Transverse colon (tissue), 4 donors: ENCODE measurements at regions of chr2 and their contacts with region 1.

Region 1: DNA sequence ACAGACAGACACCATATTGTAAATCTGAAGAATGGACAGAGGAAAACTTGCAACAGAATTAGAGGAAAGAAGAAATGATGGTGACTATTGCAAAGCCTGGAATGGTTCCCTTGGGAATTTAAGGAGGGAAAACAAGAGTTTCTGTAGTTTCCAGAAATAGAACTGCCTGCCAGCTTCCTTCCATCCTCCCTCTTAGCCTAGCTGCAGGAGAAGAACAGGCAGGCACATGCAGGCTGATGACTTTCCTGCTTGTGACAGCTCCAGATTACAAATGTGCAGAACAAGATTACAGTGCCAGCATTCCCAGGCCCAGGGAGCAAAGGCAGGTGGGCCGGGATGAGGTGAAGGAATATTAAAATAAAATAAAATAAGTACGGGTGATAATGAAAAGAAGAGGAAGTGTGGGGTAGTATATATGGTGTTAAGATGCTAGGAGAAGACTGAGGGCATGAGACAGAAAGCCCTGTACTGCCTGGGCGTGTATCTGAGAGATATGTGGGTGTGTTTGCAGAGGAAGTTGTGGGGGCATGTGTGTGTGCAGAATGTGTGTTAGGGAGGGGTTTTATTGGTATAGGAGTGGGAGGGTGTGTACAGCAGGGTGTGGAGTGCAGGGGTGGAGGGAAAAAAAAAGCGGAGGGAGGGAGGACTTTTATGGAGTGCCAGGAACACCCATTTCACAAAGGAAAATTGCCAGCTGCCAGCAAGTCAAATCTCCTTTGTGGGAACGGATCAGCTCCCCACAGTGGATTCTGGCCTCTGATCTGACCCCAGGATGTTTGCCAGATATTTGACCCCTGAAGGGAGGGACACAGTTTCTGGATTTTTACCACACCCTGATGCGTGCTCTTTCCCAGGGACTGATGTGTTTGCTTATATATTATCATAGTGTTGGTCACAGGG is 43.9 kb upstream of the NEMP2 start:
- DNase-seq: peak; percentile 75
- H3K4me3 ChIP-seq: no peak overlapping the region
- H3K27ac ChIP-seq: peak overlapping the region; percentile 77 to 85 (median 80)
- H3K4me1 ChIP-seq: peaks cover 5 to 57% (median 23%) of the 10 kb centered on the region in 4 donors
- H3K27me3 ChIP-seq: no peaks in the 10 kb centered on the region
- CTCF ChIP-seq: no peak
- EP300 ChIP-seq: peak; percentile 50
- POLR2A ChIP-seq: peak; percentile 37

Region 2: DNA sequence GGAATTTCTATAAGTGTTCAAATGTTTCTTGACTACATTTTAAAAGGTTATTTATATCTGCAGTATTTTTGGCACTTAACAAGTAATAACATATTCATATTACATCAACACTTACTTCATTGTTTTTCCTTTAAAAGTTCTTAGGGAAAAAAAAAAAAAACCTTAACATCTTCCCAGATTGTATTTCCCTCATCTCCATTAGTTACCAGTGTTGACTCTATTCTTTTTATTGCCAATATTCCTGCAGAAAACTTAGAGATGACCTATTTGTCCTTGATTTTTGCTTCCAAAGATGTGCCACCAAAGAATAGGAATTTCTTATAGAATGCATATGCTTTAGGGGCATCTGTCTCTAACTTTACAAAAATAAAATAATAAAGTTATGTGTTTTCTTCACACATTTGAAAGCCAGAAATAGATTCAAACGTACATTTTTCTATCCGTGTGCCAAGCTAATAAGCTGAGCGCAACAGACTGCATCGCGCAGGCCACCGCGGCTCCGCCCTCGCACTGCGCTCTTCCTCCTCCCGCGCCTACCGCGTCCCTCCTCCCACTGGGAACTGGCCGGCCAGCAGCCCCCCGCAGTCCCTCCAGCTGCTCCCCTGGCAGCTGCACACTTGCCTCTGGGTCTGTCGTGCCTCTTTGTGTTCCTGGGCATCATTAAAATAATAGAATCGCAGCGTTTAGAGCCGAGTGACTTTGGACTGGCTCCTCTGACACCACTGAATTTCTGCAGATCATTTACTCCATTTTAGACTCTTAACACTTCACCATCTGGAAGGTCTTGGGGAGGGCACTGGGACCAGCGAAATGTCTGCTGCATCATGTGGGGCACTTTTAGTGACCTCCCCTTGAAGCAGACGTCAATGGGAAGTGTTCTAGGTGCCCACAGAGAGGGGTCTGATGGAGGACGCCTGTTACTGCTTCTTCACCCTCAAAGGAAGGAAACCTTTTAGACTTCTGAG is 49.3 kb after region 1 on chr2:
- in situ Hi-C with region 1: no loop called
- intact Hi-C with region 1: loop called (anchors 5 kb)
- DNase-seq: peak; percentile 48
- H3K4me3 ChIP-seq: peak overlapping the region; percentile 5 to 58 (median 21)
- H3K27ac ChIP-seq: peak overlapping the region; percentile 18 to 52 (median 39)
- H3K4me1 ChIP-seq: peaks cover 0 to 15% (median 6%) of the 10 kb centered on the region in 4 donors
- H3K27me3 ChIP-seq: no peaks in the 10 kb centered on the region
- CTCF ChIP-seq: no peak
- EP300 ChIP-seq: no peak
- POLR2A ChIP-seq: no peak